HEK293 (cell line): ENCODE measurements at regions of chr12 and their contacts with region 1.

Region 1: DNA sequence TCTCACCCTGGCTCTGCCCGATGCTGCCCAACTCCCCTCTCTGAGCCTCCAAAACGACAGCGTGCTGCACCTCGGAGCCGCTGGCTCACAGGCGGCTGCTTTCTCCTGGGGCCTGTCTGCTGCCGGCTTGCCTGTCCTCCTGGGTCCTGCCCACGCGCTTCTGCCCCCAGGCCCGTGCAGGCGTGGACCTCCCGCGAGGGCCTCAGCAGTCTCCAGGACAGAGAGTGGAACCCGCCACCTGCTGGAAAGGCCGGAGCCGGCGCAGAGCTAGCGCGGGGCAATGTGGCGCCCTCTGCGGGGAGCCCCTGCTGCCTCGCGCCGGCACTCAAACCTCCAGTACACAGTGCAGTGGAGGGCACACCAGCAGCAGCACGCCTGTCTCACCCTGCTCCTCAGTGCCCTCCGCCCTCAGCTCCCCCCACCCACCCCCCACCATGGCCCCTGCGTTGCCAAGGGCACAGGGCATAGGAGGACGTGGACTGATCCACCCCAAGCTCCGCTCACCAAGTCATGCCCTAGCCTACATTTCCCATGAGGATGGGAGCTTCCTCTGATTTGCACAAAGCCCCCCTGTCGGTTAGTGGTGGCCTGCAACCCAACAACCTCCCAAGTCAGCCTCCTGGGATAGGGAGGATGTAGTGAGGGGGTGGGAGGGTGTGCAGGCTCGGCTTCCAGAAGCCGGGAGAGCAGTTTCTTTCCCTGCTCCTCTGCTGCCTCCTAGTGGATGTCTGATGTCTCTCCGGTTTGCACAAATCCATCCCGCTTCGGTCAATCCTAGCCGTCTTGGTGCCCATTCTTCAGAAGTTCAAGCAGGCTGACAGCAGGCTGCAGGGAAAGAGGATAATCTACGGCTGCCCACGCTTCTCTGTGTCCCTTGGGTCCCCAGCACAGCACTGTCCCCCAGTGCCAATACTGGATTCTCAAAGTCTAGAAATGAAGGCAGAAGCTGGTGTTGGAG is 25.2 kb downstream of the KRT8 start:
- H3K4me3 ChIP-seq: no peak overlapping the region
- H3K27ac ChIP-seq: peak overlapping the region; percentile 52; the same call in 1 of the 2 replicates
- H3K4me1 ChIP-seq: peaks cover under 1% of the 10 kb centered on the region
- CTCF ChIP-seq: peak; percentile 98

Region 2: DNA sequence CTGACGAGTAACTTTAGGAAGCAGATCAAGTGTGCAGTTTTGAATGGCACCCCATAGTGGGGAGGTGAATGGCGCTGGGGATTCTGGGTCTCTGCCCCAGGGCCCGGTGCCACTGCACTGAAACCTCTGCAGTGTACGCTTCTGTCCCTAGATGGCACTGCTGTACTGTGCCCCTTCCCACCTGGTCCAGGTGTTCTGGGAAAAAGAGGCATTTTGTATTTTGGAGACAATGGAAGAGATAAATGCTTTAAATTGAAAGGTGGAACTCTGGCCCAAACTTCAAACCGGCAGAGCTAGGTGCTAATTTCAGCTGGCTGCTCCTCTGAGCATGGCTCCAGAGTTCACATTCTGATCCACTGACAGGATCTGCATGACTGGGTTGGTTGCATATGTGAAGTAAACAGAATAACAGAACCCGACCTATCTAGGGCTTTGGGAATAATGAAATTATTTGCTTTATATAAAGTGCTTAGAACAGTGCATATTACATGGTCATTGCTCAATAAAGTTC is 740.1 kb before region 1 on chr12:
- CTCF ChIA-PET with region 1: interaction called, 88 read pairs
- POLR2A ChIA-PET with region 1: interaction called, 3 read pairs
- H3K4me3 ChIP-seq: no peak overlapping the region
- H3K27ac ChIP-seq: no peak overlapping the region
- H3K4me1 ChIP-seq: no peaks in the 10 kb centered on the region; the same call in 1 of the 2 replicates
- CTCF ChIP-seq: peak; percentile 59

Region 3: DNA sequence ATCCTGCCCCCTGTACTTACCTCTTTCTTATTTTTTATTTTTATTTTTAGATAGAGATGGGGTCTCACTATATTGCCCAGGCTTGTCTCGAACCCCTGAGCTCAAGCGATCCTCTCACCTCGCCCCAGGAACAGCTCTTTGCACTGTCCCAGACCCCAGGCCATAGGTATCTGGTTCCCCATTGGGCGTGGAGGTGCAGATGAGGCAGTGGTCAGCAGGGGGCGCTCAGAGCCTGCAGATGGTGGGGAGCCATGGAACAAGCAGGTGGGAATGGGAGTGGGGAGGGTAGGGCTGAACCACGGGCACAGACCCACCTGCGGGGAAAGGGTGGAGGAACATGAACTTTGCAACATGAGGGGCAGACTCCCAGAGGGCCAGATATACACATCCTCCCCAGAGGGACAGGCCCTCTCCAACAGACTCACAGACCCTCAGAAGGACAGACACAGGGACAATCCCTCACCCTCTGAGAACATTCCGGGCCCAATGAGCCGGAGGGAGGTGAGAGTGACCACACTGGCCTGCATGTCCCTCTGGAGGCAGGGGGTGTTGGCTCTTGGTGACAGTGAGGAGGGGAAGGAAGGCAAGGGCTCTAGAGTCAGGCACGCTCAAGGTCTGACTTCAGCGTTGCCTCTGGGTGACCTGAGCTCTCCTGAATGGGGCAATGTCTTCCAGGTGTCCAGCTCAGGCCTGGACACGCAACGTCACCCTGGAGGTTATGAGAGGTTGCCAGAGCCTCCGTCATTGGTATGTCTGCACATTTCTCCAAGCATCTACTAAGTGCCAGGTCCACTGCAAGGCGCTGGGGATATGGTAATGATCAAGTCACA is 722.7 kb before region 1 on chr12:
- CTCF ChIA-PET with region 1: interaction called, 48 read pairs
- POLR2A ChIA-PET with region 1: no interaction called
- H3K4me3 ChIP-seq: no peak overlapping the region
- H3K27ac ChIP-seq: no peak overlapping the region
- H3K4me1 ChIP-seq: no peaks in the 10 kb centered on the region
- CTCF ChIP-seq: peak; percentile 96

Region 4: GRCh38 chr12:52364901-52365489 is 514.7 kb before region 1 on chr12:
- CTCF ChIA-PET with region 1: interaction called, 200 read pairs
- POLR2A ChIA-PET with region 1: no interaction called
- H3K4me3 ChIP-seq: no peak overlapping the region
- H3K27ac ChIP-seq: no peak overlapping the region
- H3K4me1 ChIP-seq: no peaks in the 10 kb centered on the region
- CTCF ChIP-seq: no peak

Region 5: GRCh38 chr12:52380271-52380694 is 499.4 kb before region 1 on chr12:
- CTCF ChIA-PET with region 1: interaction called, 200 read pairs
- POLR2A ChIA-PET with region 1: no interaction called
- H3K4me3 ChIP-seq: no peak overlapping the region
- H3K27ac ChIP-seq: no peak overlapping the region
- H3K4me1 ChIP-seq: no peaks in the 10 kb centered on the region
- CTCF ChIP-seq: peak; percentile 19; the same call in 1 of the 2 replicates

Region 6: DNA sequence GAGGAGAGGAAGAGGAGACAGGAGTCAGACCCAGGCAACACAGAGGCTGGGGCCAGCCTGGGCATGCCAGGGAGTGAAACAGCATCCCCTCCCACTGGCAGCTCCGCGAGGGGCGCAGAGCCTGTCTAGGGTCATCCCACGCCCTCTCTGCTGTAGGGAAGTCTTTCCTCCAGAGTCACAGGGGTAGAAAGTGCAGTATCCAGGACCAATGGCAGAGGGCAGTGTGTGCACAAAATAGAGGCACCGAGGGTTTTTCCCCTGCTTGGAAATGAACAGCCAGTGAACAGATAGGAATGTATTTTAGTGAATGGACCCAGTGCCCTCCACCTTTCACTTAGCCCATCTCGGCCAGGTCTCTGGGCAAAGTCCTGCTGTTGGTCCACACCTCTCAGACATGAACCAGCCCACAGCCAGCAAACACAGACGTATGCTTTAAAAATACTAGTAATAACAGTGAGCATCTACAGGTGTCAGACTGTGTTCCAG is 296.7 kb before region 1 on chr12:
- CTCF ChIA-PET with region 1: interaction called, 127 read pairs
- POLR2A ChIA-PET with region 1: no interaction called
- H3K4me3 ChIP-seq: no peak overlapping the region
- H3K27ac ChIP-seq: no peak overlapping the region
- H3K4me1 ChIP-seq: no peaks in the 10 kb centered on the region
- CTCF ChIP-seq: peak; percentile 68

Region 7: GRCh38 chr12:52865090-52865944 is 14.4 kb before region 1 on chr12:
- CTCF ChIA-PET with region 1: interaction called, 41 read pairs
- POLR2A ChIA-PET with region 1: no interaction called
- H3K4me3 ChIP-seq: no peak overlapping the region
- H3K27ac ChIP-seq: no peak overlapping the region
- H3K4me1 ChIP-seq: no peaks in the 10 kb centered on the region; the same call in 1 of the 2 replicates
- CTCF ChIP-seq: peak; percentile 68; the same call in 1 of the 2 replicates

Region 8: GRCh38 chr12:53129170-53129569 is 249.5 kb after region 1 on chr12:
- CTCF ChIA-PET with region 1: no interaction called
- POLR2A ChIA-PET with region 1: no interaction called
- H3K4me3 ChIP-seq: no peak overlapping the region
- H3K27ac ChIP-seq: no peak overlapping the region
- H3K4me1 ChIP-seq: no peaks in the 10 kb centered on the region
- CTCF ChIP-seq: no peak

Region 9: GRCh38 chr12:53267999-53268647 is 388.4 kb after region 1 on chr12 and contains the start of gene ESPL1:
- CTCF ChIA-PET with region 1: no interaction called
- POLR2A ChIA-PET with region 1: no interaction called
- H3K4me3 ChIP-seq: peak within 1 kb of the TSS; percentile 74
- H3K27ac ChIP-seq: peak within 1 kb of the TSS; percentile 75; the same call in 1 of the 2 replicates
- H3K4me1 ChIP-seq: peaks cover 5% of the 10 kb centered on the region; the same call in 1 of the 2 replicates
- CTCF ChIP-seq: peak; percentile 73